ENCODE measurements at regions of chr1 and their contacts with region 1.

Region 1: GRCh38 chr1:207828485-207829158 is 76.8 kb downstream of the CD46 start:
- DNase-seq: peak; percentile 79
- H3K4me3 Mint-ChIP-seq: no peak overlapping the region
- H3K27ac Mint-ChIP-seq: peak overlapping the region; percentile 63
- H3K4me1 Mint-ChIP-seq: peaks cover 98% of the 10 kb centered on the region
- H3K27me3 Mint-ChIP-seq: no peaks in the 10 kb centered on the region

Region 2: DNA sequence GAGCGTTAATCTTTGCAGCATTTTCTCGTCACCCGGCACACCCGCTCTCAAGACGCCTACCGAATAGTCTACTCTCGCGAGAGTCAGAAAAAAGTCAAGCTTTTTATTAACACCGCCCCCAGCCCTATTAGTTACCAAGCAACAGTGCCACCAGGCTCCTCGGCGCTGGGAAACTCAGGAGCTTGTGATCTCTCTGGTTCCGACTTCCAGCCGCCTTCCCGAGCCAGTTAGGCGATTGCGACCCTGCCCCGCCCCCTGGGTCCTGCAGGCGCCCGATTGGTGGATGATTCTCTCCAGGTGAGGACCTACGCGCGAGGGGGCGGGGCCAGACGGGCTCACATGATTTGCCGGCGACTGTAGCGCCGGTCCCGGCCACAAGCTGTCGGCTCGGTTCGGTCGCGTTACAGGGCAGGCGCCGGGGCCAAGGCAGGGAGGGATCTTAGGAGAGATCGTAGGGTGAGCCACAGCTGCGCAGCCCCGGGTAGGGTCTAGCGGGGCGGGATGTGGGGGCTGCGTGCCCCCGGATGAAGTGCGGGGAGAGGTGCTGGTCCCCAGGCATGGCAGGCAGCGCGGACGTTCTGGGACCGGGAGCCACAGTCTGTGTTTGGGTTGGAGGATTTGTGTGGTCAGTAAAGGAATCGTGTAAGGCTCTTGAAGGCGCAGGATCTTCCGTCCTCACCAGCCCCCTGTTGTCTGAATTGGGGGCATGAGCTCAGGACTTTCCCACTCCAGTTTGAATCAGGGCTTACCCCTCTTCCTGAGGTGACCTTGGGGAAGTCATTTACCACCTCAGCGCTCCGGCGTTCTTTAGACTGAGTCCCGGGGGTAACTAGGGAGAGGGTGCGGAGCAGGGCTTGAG is 775.5 kb before region 1 on chr1 and contains the start of gene PFKFB2:
- CTCF ChIA-PET with region 1: no interaction called
- intact Hi-C with region 1: loop called (anchors 5 kb)
- DNase-seq: peak; percentile 97
- H3K4me3 Mint-ChIP-seq: peak within 1 kb of the TSS; percentile 97
- H3K27ac Mint-ChIP-seq: peak within 1 kb of the TSS; percentile 68
- H3K4me1 Mint-ChIP-seq: peaks cover 36% of the 10 kb centered on the region
- H3K27me3 Mint-ChIP-seq: no peaks in the 10 kb centered on the region
- total RNA-seq, gene PFKFB2: 3.4 to 6.2 TPM

Region 3: GRCh38 chr1:207336559-207337467 is 491.8 kb before region 1 on chr1:
- CTCF ChIA-PET with region 1: no interaction called
- intact Hi-C with region 1: no loop called
- DNase-seq: peak; percentile 43
- H3K4me3 Mint-ChIP-seq: no peak overlapping the region
- H3K27ac Mint-ChIP-seq: peak overlapping the region; percentile 82
- H3K4me1 Mint-ChIP-seq: peaks cover 68% of the 10 kb centered on the region
- H3K27me3 Mint-ChIP-seq: no peaks in the 10 kb centered on the region

Region 4: DNA sequence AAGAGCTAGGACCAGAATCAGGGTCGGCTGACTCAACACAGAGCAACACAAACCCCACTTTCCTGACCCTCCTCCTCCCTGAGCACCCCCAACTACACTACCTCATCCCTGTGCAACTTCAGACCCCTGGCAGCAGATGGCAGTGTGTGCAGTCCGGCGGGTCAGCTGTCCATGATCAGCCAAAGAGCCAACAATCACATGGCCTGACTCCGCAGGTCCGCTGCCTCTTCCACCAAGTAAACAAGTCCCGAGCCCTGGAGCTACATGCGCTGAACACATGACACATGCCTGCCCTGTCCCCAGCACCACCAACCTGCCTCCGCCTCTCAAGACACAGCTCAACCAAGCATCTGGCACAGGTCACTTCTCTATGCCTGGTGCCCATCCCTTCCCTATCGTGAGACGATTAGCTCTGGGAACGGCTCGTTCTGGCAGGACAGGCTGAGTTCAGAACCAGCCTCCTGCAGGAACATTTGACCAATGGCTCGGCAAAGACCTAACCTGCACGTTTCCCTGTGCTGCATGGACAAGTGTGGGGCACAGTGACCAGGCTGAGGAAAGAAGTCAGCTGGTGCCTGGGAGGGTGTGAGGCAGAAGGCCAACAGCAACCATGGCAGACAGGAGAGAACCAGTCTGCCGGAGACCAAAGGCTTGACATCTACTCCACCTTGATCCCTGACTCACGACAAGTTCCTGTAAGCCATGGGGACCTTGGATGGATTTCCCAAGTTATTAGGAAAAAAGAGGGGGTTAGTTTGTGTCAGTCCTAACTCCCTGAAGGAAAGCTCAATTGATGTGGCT is 16.5 kb before region 1 on chr1:
- CTCF ChIA-PET with region 1: interaction called, 13 read pairs
- intact Hi-C with region 1: no loop called
- DNase-seq: no peak
- H3K4me3 Mint-ChIP-seq: no peak overlapping the region
- H3K27ac Mint-ChIP-seq: peak overlapping the region; percentile 83
- H3K4me1 Mint-ChIP-seq: peaks cover 83% of the 10 kb centered on the region
- H3K27me3 Mint-ChIP-seq: no peaks in the 10 kb centered on the region

Region 5: DNA sequence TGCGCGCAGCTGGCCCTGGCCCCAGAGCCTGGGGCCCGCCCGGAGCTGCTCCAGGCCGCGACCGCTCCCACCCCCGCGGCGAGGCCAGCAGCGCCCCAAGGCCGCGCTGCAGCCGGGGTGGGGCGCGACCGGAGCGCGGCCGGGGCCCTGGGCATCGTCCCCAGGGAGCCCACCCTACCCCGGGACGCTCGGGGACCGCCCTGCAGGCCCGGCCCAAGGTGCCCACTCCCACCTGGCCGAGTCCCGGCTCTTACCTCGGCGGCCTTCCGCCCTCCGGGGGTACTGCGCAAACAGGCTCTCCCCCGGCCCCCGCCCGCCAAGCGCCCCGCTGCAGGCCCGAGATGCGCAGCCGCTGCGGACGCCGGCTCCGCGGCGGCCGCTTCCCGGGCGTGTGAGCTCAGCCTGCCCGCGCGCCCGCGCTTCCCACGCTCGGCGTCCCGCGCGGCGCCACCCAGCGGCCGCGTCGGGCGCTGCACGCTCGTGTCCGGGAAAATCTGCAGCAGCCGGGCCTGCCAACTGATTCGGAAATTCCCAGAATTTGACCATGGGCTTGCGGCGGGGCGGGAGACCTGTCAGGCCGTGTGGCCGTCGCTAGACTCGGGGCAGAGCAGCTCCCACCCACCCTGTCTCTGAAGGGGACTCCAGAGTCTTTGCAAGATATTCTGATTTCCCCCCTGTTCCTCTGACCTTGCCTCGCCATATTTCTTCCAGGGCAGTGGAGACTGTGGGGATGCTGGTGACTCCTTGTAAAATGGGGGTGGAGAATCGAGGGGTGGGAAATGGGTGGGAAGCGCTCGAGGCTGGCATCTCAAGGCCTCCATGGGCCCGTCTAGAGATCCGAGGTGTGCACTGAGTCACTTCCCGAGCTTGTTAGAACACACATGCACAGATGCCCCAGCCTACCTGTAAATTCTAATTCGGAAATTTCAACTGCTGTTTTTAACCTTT is 40.4 kb after region 1 on chr1:
- CTCF ChIA-PET with region 1: interaction called, 342 read pairs
- intact Hi-C with region 1: loop called (anchors 1 kb)
- DNase-seq: peak; percentile 63
- H3K4me3 Mint-ChIP-seq: peak overlapping the region; percentile 92
- H3K27ac Mint-ChIP-seq: peak overlapping the region; percentile 92
- H3K4me1 Mint-ChIP-seq: peaks cover 81% of the 10 kb centered on the region
- H3K27me3 Mint-ChIP-seq: no peaks in the 10 kb centered on the region

Region 6: DNA sequence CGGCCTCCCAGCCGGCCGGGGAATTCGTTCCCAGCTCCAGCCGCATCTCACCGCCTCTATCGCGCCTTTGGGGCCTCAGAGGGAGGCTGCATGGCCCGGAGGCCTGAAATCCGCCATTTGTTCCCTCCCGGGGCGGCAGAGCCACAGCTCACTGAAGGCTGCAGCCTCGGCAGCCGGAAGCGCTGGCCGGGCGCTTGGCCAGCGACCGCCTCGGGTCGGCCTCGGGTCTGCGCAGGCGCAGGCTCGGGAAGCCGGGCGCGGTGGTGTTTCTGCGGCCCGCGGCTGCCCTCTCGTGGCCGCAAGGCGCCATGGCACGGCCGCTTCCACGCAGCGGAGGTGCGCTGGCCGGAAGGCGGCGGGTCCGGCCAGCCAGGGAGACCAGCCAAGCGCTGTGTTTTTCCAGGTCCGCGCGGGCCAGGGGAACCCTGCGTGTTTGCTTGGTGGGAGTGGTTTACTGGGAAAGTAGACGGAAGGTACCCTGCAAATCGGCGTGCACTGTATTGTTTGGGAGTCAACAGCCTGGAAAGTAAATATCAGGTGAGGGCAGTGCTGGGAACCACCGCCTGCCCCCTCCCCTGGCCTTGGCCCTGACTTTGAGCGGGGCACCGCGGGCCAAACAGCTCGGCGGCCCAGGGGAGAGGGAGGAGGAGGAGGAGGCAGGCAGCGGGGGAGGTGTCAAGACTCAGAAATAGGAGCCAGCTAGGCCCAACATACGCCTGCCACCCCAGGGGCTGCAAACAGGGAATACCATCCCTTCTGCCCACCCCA is 135.0 kb after region 1 on chr1:
- CTCF ChIA-PET with region 1: interaction called, 29 read pairs
- intact Hi-C with region 1: loop called (anchors 1 kb)
- DNase-seq: peak; percentile 80
- H3K4me3 Mint-ChIP-seq: peak overlapping the region; percentile 81
- H3K27ac Mint-ChIP-seq: no peak overlapping the region
- H3K4me1 Mint-ChIP-seq: peaks cover 10% of the 10 kb centered on the region
- H3K27me3 Mint-ChIP-seq: peaks cover 27% of the 10 kb centered on the region

Region 7: DNA sequence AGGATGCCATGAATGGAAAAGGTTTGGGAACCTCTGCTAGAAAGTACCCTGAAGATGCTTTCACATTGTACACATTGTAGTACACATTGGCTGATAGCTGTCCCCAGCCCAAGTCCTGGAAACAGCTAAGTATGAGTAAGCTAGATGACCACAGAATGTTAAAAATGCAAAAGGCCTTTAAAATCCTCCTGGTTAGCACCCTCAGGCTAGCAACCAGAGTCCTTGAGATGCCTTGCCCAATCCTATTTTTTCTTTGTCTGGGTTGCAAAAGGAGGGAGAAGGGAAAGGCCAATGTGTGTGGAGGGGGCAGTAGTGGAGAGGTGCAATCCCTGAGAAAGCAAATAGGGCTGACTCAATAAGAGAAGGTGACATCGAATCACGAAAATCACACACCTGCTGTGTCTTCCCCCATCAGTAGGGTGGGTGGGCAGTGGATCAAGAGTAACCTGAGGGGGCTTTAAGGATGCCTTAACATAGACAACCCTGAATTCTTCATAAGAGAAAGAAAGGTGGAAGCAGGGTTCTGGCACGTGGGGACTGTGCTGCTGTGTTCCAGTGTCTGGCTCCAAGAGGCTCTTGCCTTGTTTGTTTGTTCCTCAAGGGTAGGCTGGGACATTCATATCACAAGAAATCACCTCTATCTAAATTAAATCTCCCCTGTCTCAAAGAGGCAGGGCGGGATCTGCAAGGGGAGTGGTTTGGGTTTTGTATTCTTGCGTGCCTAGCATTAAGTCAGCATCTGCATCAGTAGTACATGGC is 681.8 kb after region 1 on chr1:
- CTCF ChIA-PET with region 1: no interaction called
- intact Hi-C with region 1: no loop called
- DNase-seq: no peak
- H3K4me3 Mint-ChIP-seq: no peak overlapping the region
- H3K27ac Mint-ChIP-seq: no peak overlapping the region
- H3K4me1 Mint-ChIP-seq: no peaks in the 10 kb centered on the region
- H3K27me3 Mint-ChIP-seq: no peaks in the 10 kb centered on the region

Measured in activated naive CD4-positive, alpha-beta T cell treated with anti-CD3 and anti-CD28 coated beads for 36 hours (primary cell).